CD8-positive, alpha-beta T cell (primary cell): ENCODE measurements at regions of chr1 and their contacts with region 1.

Region 1: GRCh38 chr1:15975805-15976680 is at the start of gene ZBTB17:
- DNase-seq: peak; percentile 90 to 98 (median 95)
- ATAC-seq: peak; percentile 88
- H3K4me3 ChIP-seq: peak within 1 kb of the TSS; percentile 89 to 93
- H3K4me3 Mint-ChIP-seq: peak within 1 kb of the TSS; percentile 90
- H3K27ac ChIP-seq: peak within 1 kb of the TSS; percentile 68 to 87
- H3K27ac Mint-ChIP-seq: peak within 1 kb of the TSS; percentile 94
- H3K4me1 ChIP-seq: peaks cover 11% of the 10 kb centered on the region
- H3K4me1 Mint-ChIP-seq: peaks cover 38% of the 10 kb centered on the region
- H3K27me3 ChIP-seq: no peaks in the 10 kb centered on the region
- H3K27me3 Mint-ChIP-seq: no peaks in the 10 kb centered on the region
- CTCF ChIP-seq: no peak
- total RNA-seq, gene ZBTB17: 106 to 115 TPM

Region 2: GRCh38 chr1:15918962-15919715 is 56.9 kb before region 1 on chr1:
- CTCF ChIA-PET with region 1: no interaction called
- POLR2A ChIA-PET with region 1: no interaction called
- intact Hi-C with region 1: loop called in 1 of 2 experiments (anchors 2 kb)
- DNase-seq: peak in 7 of 9 experiments; percentile 16 to 76 (median 48)
- ATAC-seq: peak; percentile 82
- H3K4me3 ChIP-seq: no peak overlapping the region
- H3K4me3 Mint-ChIP-seq: no peak overlapping the region
- H3K27ac ChIP-seq: peak overlapping the region in 1 of 2 experiments; percentile 12
- H3K27ac Mint-ChIP-seq: peak overlapping the region; percentile 34
- H3K4me1 ChIP-seq: peaks cover 23% of the 10 kb centered on the region
- H3K4me1 Mint-ChIP-seq: peaks cover 32% of the 10 kb centered on the region
- H3K27me3 ChIP-seq: no peaks in the 10 kb centered on the region
- H3K27me3 Mint-ChIP-seq: no peaks in the 10 kb centered on the region
- CTCF ChIP-seq: no peak

Region 3: DNA sequence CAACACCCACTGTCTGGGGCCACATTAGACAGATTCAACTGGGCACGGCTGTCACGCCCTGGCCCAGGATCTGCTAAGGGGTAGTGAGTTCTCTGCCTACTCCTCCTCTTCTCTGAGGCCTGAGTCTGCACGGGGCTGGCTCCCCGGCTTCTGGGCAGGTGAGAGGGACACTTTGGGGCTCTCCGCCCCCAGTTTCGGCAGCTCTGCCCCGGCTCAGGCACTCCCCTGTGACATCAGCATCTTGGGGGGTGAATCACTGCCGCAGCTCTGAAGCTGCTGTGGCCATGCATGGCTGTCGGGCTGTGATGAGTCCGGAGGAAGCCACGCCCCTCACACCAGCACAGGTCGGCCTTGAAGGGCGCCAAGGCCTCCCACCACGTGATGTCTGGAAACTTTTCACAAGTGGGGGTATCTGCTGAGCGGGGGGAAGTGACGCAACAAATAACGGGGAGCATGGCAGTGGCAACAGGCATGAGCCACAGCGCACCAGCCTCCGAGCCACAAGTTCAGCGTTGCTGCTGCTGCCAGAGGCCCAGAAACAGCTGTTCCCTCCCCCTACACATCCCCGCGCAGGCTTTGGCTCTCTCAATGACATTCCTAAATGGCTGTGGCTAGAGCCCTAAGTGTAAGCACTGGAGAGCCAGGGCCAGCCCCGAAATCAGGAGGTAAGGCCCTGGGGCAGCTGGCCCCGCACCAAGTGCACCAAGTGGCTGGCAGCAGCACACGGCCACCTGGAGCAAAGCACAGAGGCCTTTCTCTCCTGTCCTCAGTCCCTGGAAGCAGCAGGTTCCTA is 26.4 kb before region 1 on chr1:
- CTCF ChIA-PET with region 1: no interaction called
- POLR2A ChIA-PET with region 1: no interaction called
- intact Hi-C with region 1: loop called (anchors 1 kb)
- DNase-seq: peak; percentile 69 to 99 (median 86)
- ATAC-seq: peak; percentile 87
- H3K4me3 ChIP-seq: peak overlapping the region in 1 of 2 experiments; percentile 26
- H3K4me3 Mint-ChIP-seq: peak overlapping the region; percentile 63
- H3K27ac ChIP-seq: peak overlapping the region; percentile 60 to 96
- H3K27ac Mint-ChIP-seq: peak overlapping the region; percentile 97
- H3K4me1 ChIP-seq: peaks cover 51% of the 10 kb centered on the region
- H3K4me1 Mint-ChIP-seq: peaks cover 60% of the 10 kb centered on the region
- H3K27me3 ChIP-seq: no peaks in the 10 kb centered on the region
- H3K27me3 Mint-ChIP-seq: no peaks in the 10 kb centered on the region
- CTCF ChIP-seq: no peak

Region 4: DNA sequence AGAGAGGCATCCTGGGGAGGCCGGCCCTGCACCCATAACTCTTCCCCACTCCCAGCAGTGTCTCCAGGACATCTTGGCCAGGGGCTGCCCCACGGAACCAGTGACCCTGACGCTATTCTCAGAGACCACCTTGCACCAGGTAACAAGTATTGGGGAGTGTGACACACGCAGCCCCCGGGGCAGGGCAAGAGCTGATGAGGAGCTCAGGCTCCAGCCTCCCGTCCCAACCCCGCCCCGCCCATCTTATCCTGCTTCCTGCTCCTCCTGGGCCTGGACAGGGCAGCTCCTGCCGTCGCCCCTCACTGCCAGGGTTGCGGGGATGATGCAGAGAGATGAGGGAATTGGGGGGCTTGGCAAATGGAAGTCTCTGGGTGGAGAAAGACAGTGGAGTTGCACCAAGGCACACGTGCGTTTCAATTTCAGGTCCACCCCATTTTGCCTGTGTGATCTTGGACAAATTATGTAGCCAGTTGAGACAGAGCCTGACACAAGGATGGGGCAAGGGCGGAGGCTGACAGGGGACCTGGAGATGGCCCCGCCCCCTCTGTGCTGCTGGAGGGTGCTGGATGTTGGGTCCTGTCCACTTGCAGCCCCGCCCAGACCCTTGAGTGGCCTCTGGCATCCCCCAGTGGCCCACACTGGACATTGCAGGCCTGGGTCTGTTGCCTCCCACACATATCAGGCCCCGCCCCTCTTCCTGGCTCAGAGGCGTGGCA is 56.5 kb after region 1 on chr1:
- CTCF ChIA-PET with region 1: no interaction called
- POLR2A ChIA-PET with region 1: no interaction called
- intact Hi-C with region 1: no loop called
- DNase-seq: peak in 6 of 9 experiments; percentile 6 to 61 (median 43)
- ATAC-seq: peak; percentile 91
- H3K4me3 ChIP-seq: no peak overlapping the region
- H3K4me3 Mint-ChIP-seq: no peak overlapping the region
- H3K27ac ChIP-seq: no peak overlapping the region
- H3K27ac Mint-ChIP-seq: no peak overlapping the region
- H3K4me1 ChIP-seq: no peaks in the 10 kb centered on the region
- H3K4me1 Mint-ChIP-seq: peaks cover 2% of the 10 kb centered on the region
- H3K27me3 ChIP-seq: peaks cover 0 to 3% of the 10 kb centered on the region in 2 experiments
- H3K27me3 Mint-ChIP-seq: peaks cover 27% of the 10 kb centered on the region
- CTCF ChIP-seq: no peak